ENCODE measurements at regions of chr7 and their contacts with region 1.

Region 1: DNA sequence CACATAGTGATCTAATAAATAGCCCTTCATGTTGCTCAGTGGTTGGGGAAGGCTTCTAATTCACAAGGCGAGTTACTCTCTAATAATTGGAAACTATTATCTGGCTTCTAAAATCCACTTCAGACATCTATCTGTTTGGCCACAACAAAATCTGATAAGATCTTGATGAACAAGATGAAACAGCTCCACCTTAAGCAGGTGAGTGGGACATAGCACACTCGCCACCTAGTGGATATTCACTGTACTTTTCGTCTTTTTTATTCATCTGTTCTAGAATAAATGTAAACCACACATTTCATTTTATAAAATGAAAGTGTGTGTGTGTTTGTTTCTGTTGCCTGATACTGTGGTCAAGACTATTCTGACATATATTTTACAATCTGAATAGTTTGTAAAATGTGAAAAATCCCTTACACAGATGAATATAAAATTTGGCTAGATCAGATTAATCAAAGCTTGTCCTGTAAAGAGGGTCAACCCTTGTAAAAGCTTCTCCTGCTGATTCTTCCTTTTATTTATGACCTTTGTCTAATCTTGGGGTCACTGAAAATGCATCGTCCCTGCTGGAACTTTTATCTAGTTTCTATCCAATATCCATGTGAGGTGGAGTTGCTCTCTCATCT is 26.5 kb upstream of the CNTNAP2 start:
- DNase-seq: peak; percentile 62
- H3K4me3 Mint-ChIP-seq: no peak overlapping the region
- H3K27ac Mint-ChIP-seq: no peak overlapping the region
- H3K4me1 Mint-ChIP-seq: no peaks in the 10 kb centered on the region
- H3K27me3 Mint-ChIP-seq: no peaks in the 10 kb centered on the region
- CTCF ChIP-seq: peak; percentile 67

Region 2: GRCh38 chr7:144513334-144513733 is 1576.8 kb before region 1 on chr7:
- CTCF ChIA-PET with region 1: interaction called, 3 read pairs
- POLR2A ChIA-PET with region 1: no interaction called
- intact Hi-C with region 1: loop called (anchors 2 kb)
- DNase-seq: peak; percentile 49
- H3K4me3 Mint-ChIP-seq: no peak overlapping the region
- H3K27ac Mint-ChIP-seq: no peak overlapping the region
- H3K4me1 Mint-ChIP-seq: no peaks in the 10 kb centered on the region
- H3K27me3 Mint-ChIP-seq: no peaks in the 10 kb centered on the region
- CTCF ChIP-seq: peak; percentile 47

Region 3: GRCh38 chr7:145036604-145037405 is 1053.3 kb before region 1 on chr7:
- CTCF ChIA-PET with region 1: interaction called, 31 read pairs
- POLR2A ChIA-PET with region 1: no interaction called
- intact Hi-C with region 1: loop called (anchors 1 kb)
- DNase-seq: peak; percentile 69
- H3K4me3 Mint-ChIP-seq: peak overlapping the region; percentile 37
- H3K27ac Mint-ChIP-seq: no peak overlapping the region
- H3K4me1 Mint-ChIP-seq: no peaks in the 10 kb centered on the region
- H3K27me3 Mint-ChIP-seq: no peaks in the 10 kb centered on the region
- CTCF ChIP-seq: peak; percentile 77

Region 4: DNA sequence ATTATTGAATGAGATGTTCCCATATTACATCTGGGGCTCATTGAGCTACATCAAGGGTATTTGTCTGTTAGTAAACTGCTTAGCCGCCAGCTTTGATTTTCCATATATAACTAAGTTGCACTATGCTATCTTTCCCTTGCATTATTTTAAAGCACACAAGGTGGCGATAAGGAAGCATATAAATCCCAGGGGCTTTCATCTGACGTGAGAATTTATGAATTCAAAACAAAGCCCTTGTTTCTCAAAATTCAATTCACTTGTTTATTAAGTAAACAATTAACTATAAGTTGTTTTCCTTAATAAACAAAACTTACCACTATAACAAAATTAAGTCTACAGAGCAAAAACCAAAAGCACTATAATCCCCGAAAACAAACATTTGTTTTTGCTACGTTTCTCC is 920.2 kb before region 1 on chr7:
- CTCF ChIA-PET with region 1: interaction called, 43 read pairs
- POLR2A ChIA-PET with region 1: interaction called, 3 read pairs
- intact Hi-C with region 1: loop called (anchors 1 kb)
- DNase-seq: peak; percentile 49
- H3K4me3 Mint-ChIP-seq: no peak overlapping the region
- H3K27ac Mint-ChIP-seq: peak overlapping the region; percentile 20
- H3K4me1 Mint-ChIP-seq: peaks cover 17% of the 10 kb centered on the region
- H3K27me3 Mint-ChIP-seq: no peaks in the 10 kb centered on the region
- CTCF ChIP-seq: peak; percentile 43

Region 5: DNA sequence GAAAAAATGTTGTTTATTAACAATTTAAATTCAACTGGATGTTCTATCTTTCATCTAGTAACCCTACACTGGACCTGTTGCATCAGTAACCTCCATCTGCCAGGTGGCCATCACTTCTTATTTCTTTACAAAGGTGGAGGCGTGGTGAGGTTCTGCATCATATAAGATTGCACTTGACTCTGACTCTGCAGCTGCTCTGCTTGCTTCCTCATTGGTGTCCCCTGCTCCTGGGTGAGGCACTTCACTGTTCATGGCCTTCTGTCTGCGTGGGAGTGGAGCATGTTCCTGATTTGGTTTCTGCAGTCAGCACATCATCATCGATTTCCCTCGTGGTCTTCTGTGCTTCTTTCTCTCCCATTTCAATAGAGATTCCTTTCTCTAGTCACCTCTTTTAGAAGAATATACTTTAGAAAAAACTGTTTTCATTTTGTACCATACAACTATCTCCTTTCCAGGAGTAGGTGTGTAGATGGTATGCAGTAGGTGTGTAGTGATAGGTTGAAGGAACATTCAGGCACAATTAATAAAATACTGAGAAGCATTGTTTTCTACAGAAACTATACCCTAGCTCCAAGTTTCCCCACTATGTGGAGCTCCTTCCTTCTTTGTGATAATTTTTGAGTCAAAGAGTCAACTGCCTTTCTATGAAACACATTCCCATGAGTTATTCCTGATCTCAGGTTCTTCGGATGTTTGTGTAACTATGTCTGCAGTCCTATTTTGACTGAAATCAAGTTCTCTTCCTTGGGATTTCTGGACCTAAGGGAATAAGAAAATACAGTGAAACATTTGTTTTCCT is 205.2 kb before region 1 on chr7:
- CTCF ChIA-PET with region 1: interaction called, 15 read pairs
- POLR2A ChIA-PET with region 1: no interaction called
- intact Hi-C with region 1: loop called (anchors 10 kb)
- DNase-seq: no peak
- H3K4me3 Mint-ChIP-seq: no peak overlapping the region
- H3K27ac Mint-ChIP-seq: no peak overlapping the region
- H3K4me1 Mint-ChIP-seq: peaks cover 3% of the 10 kb centered on the region
- H3K27me3 Mint-ChIP-seq: peaks cover 8% of the 10 kb centered on the region
- CTCF ChIP-seq: no peak

Region 6: GRCh38 chr7:146276888-146277287 is 186.8 kb after region 1 on chr7:
- CTCF ChIA-PET with region 1: no interaction called
- POLR2A ChIA-PET with region 1: no interaction called
- intact Hi-C with region 1: no loop called
- DNase-seq: no peak
- H3K4me3 Mint-ChIP-seq: no peak overlapping the region
- H3K27ac Mint-ChIP-seq: no peak overlapping the region
- H3K4me1 Mint-ChIP-seq: no peaks in the 10 kb centered on the region
- H3K27me3 Mint-ChIP-seq: peaks cover 82% of the 10 kb centered on the region
- CTCF ChIP-seq: no peak

Measured in MCF 10A (cell line).